CD4-positive, alpha-beta memory T cell (primary cell): ENCODE measurements at regions of chr1 and their contacts with region 1.

Region 1: DNA sequence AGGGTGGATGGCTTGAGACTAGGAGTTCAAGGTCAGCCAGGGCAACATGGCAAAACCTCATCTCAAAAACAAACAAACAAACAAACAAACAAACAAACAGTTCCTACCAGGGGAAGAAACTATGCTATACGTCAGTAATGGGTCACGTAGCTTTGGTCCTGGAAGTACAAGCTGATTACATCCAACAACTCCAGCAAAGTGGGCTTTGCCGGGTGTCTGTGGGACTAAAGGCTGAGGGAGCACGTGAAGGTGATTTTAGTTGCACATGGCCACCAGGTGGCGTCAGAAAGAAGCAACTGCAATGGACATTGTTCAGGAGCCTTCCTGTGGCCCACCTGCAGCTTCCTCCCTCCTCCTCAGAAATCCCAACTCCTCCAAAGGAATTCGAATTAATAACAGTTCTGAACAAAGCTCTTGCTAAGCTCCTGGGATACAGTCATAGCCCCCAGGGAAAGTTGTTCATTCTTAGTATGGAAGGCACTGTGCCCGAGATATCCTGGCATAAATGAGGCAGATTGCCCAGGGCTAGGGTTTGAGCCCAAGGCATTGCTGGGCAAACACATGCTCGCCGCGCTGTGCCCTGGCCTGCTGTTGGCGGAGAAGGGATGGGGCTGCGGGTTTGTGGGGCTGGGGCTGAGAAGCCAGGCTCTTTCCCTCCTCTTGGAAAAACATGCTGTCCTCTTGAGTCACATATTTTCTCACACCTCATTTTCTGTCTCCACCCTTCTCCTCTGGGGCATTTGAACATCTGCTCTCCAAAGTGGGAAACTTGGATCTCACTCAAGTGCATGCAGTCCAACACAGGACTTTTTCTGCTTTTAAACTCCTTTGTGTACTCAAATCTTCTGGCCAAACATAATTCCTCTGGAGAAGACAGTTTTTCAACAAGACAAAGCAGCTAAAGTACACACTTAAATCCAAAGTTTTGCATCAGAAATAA is 28.6 kb downstream of the AKNAD1 start:
- DNase-seq: peak; percentile 38 to 59 (median 57)
- H3K4me3 ChIP-seq: no peak overlapping the region
- H3K4me3 Mint-ChIP-seq: no peak overlapping the region
- H3K27ac ChIP-seq: no peak overlapping the region
- H3K27ac Mint-ChIP-seq: no peak overlapping the region
- H3K4me1 ChIP-seq: peaks cover 8% of the 10 kb centered on the region
- H3K4me1 Mint-ChIP-seq: peaks cover 0 to 10% (median 7%) of the 10 kb centered on the region in 4 donors
- H3K27me3 ChIP-seq: no peaks in the 10 kb centered on the region
- H3K27me3 Mint-ChIP-seq: peaks cover 2 to 3% of the 10 kb centered on the region in 2 donors

Region 2: DNA sequence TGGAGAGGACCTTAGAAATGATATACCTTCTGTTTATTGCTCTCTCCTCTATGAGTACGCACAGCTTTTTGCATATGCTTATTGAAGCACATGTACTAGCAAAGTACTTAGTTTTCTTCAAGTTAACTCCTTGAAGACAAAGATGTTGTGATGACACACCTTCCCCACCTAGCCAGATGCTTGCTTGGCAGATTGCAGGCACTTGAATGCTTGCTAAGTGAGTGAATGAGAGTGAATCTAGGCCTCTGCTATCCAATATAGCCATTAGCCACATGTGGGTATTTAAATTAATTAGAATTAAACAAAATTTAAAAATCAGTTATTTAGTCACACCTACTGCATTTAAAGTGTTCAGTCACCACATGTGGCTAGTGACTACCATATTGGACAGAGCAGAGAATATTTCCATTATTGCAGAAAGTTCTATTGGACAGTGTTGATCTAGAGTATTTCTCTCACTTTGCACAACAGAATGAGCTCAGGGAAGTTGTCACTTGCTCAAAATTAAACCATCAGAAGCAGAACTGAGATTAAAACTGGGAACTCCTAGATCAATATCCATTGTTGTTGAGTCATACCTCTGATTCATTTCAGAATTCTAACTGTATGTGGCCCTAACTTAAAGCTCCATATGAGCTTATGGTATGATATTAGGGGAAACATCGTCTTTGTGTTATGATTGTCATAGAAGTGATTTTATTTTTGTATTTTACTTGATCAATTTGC is 277.0 kb before region 1 on chr1:
- CTCF ChIA-PET with region 1: no interaction called
- POLR2A ChIA-PET with region 1: no interaction called
- intact Hi-C with region 1: no loop called
- DNase-seq: no peak
- H3K4me3 ChIP-seq: no peak overlapping the region
- H3K4me3 Mint-ChIP-seq: no peak overlapping the region
- H3K27ac ChIP-seq: no peak overlapping the region
- H3K27ac Mint-ChIP-seq: no peak overlapping the region
- H3K4me1 ChIP-seq: no peaks in the 10 kb centered on the region
- H3K4me1 Mint-ChIP-seq: no peaks in the 10 kb centered on the region
- H3K27me3 ChIP-seq: no peaks in the 10 kb centered on the region
- H3K27me3 Mint-ChIP-seq: no peaks in the 10 kb centered on the region

Region 3: GRCh38 chr1:108732398-108732797 is 95.9 kb before region 1 on chr1:
- CTCF ChIA-PET with region 1: no interaction called
- POLR2A ChIA-PET with region 1: no interaction called
- intact Hi-C with region 1: no loop called
- DNase-seq: no peak
- H3K4me3 ChIP-seq: no peak overlapping the region
- H3K4me3 Mint-ChIP-seq: no peak overlapping the region
- H3K27ac ChIP-seq: no peak overlapping the region
- H3K27ac Mint-ChIP-seq: no peak overlapping the region
- H3K4me1 ChIP-seq: no peaks in the 10 kb centered on the region
- H3K4me1 Mint-ChIP-seq: no peaks in the 10 kb centered on the region
- H3K27me3 ChIP-seq: no peaks in the 10 kb centered on the region
- H3K27me3 Mint-ChIP-seq: peaks cover 7 to 12% of the 10 kb centered on the region in 2 donors

Region 4: DNA sequence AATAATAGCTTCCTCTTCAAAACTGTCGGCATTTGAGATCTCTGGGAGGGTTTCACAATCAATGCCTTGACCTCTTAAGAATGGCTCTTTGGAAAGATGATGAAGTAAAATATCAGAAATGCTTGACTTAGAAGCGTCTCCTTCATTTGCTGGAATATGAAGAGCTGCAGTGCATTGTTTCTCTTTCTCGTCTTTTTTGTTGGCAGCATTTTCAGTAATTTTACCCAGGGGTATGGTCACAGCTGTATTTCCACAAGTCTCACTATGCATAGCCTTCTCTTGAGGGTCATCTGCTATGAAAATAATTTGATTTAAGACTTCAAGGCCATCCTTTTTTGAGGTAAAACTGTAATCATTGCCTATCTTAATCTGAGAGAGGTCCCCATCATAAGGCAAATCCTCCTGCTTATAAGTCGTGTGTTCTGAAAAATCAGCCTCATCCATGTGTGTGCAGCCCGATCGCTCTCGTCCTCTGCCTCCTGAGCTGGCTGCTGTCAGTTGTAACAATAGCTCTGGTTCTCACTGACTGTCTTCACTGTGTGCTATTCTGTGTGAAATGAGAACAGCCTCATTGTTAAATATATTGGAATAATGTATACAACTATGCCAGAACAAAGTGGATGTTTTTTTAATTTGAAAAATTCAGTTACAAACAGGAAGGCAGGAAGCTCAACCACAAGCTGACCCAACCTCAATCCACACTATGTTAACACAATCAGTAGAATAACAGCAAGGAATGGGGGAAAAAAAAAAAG is 24.1 kb after region 1 on chr1:
- CTCF ChIA-PET with region 1: interaction called, 25 read pairs
- POLR2A ChIA-PET with region 1: no interaction called
- intact Hi-C with region 1: no loop called
- DNase-seq: no peak
- H3K4me3 ChIP-seq: no peak overlapping the region
- H3K4me3 Mint-ChIP-seq: no peak overlapping the region
- H3K27ac ChIP-seq: no peak overlapping the region
- H3K27ac Mint-ChIP-seq: peak overlapping the region in 2 of 7 donors; percentile 40 to 62
- H3K4me1 ChIP-seq: peaks cover 7% of the 10 kb centered on the region
- H3K4me1 Mint-ChIP-seq: peaks cover 2 to 7% (median 6%) of the 10 kb centered on the region in 4 donors
- H3K27me3 ChIP-seq: no peaks in the 10 kb centered on the region
- H3K27me3 Mint-ChIP-seq: peaks cover 5 to 12% of the 10 kb centered on the region in 2 donors

Region 5: DNA sequence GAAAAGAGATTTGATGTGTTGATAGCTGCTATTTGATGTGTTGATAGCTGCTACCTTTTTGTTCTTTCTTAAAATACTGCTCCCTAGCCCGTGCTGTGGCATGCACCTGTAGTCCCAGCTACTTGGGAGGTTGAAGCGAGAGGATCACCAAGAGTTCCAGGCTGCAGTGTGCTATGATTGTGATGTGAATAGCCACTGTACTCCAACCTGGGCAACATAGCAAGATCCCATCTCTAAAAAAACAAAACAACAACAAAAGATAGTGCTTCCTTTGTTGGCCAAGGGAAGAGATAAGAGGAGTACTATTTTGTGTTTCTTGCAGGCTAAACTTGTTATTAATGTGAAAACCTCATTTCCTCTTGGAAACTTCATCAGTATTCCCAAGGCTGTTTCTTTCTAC is 54.5 kb after region 1 on chr1:
- CTCF ChIA-PET with region 1: interaction called, 25 read pairs
- POLR2A ChIA-PET with region 1: no interaction called
- intact Hi-C with region 1: no loop called
- DNase-seq: no peak
- H3K4me3 ChIP-seq: no peak overlapping the region
- H3K4me3 Mint-ChIP-seq: no peak overlapping the region
- H3K27ac ChIP-seq: no peak overlapping the region
- H3K27ac Mint-ChIP-seq: no peak overlapping the region
- H3K4me1 ChIP-seq: peaks cover 4% of the 10 kb centered on the region
- H3K4me1 Mint-ChIP-seq: peaks cover 3 to 8% (median 4%) of the 10 kb centered on the region in 4 donors
- H3K27me3 ChIP-seq: no peaks in the 10 kb centered on the region
- H3K27me3 Mint-ChIP-seq: no peaks in the 10 kb centered on the region

Region 6: GRCh38 chr1:108897865-108898720 is 69.8 kb after region 1 on chr1:
- CTCF ChIA-PET with region 1: interaction called, 238 read pairs
- POLR2A ChIA-PET with region 1: interaction called, 3 read pairs
- intact Hi-C with region 1: loop called (anchors 1 kb)
- DNase-seq: peak; percentile 43 to 63 (median 55)
- H3K4me3 ChIP-seq: no peak overlapping the region
- H3K4me3 Mint-ChIP-seq: no peak overlapping the region
- H3K27ac ChIP-seq: no peak overlapping the region
- H3K27ac Mint-ChIP-seq: peak overlapping the region in 1 of 7 donors; percentile 38
- H3K4me1 ChIP-seq: no peaks in the 10 kb centered on the region
- H3K4me1 Mint-ChIP-seq: peaks cover 0 to 1% (median 0%) of the 10 kb centered on the region in 4 donors
- H3K27me3 ChIP-seq: no peaks in the 10 kb centered on the region
- H3K27me3 Mint-ChIP-seq: no peaks in the 10 kb centered on the region